CD8-positive, alpha-beta T cell (primary cell): ENCODE measurements at regions of chr14 and their contacts with region 1.

Region 1: DNA sequence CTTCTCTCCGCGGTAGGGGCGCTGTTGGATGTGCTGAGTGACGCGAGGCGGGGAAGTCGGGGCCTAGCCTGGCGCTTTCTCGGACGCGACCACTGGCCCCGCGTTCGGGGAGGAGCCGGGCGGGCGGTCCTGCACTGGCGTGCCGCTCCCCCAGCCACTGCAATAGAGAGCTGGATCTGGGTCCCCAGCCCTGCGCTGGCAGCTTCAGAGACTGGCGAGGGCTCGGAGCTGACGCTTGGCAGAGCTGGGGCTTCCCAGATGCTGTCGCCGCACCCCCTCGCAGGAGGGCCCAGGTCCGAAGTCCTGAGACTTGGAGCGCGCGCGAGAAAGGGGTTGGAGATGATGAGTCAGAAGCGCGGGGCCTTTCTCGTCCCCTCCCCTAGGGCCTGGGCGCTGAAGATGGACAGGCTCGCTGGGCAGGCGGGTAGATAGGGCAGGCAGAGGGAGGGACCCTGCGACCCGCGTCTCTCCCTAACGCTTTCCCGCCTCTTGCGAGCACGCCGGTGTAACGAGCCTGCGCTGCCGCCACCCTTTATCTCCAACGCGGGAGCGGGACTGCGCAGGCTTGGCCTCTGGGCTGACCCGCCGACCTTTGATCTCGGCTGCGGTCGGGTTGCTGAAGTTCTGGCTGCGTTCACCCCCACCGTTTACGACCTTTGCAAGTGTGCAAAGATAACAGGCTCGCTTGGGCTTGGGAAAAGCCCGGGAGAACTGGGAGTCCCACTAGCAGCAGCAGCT is 3.0 kb downstream of the TMEM253 start:
- DNase-seq: peak; percentile 87 to 96 (median 93)
- ATAC-seq: peak; percentile 85
- H3K4me3 ChIP-seq: peak overlapping the region; percentile 68 to 75
- H3K4me3 Mint-ChIP-seq: peak overlapping the region; percentile 91
- H3K27ac ChIP-seq: peak overlapping the region; percentile 94 to 99
- H3K27ac Mint-ChIP-seq: peak overlapping the region; percentile 95
- H3K4me1 ChIP-seq: peaks cover 20% of the 10 kb centered on the region
- H3K4me1 Mint-ChIP-seq: peaks cover 21% of the 10 kb centered on the region
- H3K27me3 ChIP-seq: no peaks in the 10 kb centered on the region
- H3K27me3 Mint-ChIP-seq: no peaks in the 10 kb centered on the region
- CTCF ChIP-seq: peak; percentile 73

Region 2: DNA sequence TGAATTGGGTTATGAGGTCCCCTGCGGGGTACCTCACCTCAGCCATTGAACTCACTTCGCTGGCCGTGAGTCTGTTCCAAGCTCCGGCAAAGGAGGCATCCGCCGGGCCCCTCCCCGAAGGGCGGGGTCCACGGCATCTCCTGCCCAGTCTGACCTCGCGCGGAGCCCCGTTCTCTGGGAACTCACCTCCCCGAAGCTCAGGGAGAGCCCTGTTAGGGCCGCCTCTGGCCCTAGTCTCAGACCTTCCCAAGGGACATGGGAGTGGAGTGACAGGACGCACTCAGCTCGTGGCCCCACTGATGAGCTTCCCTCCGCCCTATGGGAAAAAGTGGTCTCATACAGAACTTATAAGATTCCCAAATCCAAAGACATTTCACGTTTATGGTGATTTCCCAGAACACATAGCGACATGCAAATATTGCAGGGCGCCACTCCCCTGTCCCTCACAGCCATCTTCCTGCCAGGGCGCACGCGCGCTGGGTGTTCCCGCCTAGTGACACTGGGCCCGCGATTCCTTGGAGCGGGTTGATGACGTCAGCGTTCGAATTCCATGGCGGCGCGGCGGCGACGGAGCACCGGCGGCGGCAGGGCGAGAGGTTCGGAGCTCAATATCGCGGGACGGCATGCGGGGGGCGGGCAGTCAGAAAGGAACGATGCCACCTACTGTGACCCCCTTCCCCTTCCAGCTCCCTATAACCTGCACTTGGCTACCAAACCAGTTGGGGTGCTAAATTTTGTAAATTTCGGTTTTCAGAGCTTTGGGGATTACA is 760.6 kb before region 1 on chr14 and contains the start of gene PARP2:
- CTCF ChIA-PET with region 1: no interaction called
- POLR2A ChIA-PET with region 1: no interaction called
- intact Hi-C with region 1: loop called in 1 of 2 experiments (anchors 10 kb)
- DNase-seq: peak; percentile 70 to 97 (median 84)
- ATAC-seq: peak; percentile 81
- H3K4me3 ChIP-seq: peak within 1 kb of the TSS; percentile 96 to 98
- H3K4me3 Mint-ChIP-seq: peak within 1 kb of the TSS; percentile 100
- H3K27ac ChIP-seq: peak within 1 kb of the TSS; percentile 79 to 93
- H3K27ac Mint-ChIP-seq: peak within 1 kb of the TSS; percentile 97
- H3K4me1 ChIP-seq: peaks cover 8% of the 10 kb centered on the region
- H3K4me1 Mint-ChIP-seq: peaks cover 18% of the 10 kb centered on the region
- H3K27me3 ChIP-seq: peaks cover 0 to 3% of the 10 kb centered on the region in 2 experiments
- H3K27me3 Mint-ChIP-seq: no peaks in the 10 kb centered on the region
- CTCF ChIP-seq: peak; percentile 14
- total RNA-seq, gene PARP2: 15.9 to 16.5 TPM

Region 3: GRCh38 chr14:20697273-20698017 is 406.4 kb before region 1 on chr14:
- CTCF ChIA-PET with region 1: no interaction called
- POLR2A ChIA-PET with region 1: no interaction called
- intact Hi-C with region 1: loop called in 1 of 2 experiments (anchors 2 kb)
- DNase-seq: peak; percentile 44 to 76 (median 60)
- ATAC-seq: peak; percentile 72
- H3K4me3 ChIP-seq: no peak overlapping the region
- H3K4me3 Mint-ChIP-seq: no peak overlapping the region
- H3K27ac ChIP-seq: no peak overlapping the region
- H3K27ac Mint-ChIP-seq: no peak overlapping the region
- H3K4me1 ChIP-seq: no peaks in the 10 kb centered on the region
- H3K4me1 Mint-ChIP-seq: no peaks in the 10 kb centered on the region
- H3K27me3 ChIP-seq: no peaks in the 10 kb centered on the region
- H3K27me3 Mint-ChIP-seq: no peaks in the 10 kb centered on the region
- CTCF ChIP-seq: peak; percentile 75

Region 4: GRCh38 chr14:20989572-20990551 is 114.0 kb before region 1 on chr14 and contains the start of gene METTL17:
- CTCF ChIA-PET with region 1: interaction called, 3 read pairs
- POLR2A ChIA-PET with region 1: interaction called, 5 read pairs
- intact Hi-C with region 1: loop called in 1 of 2 experiments (anchors 1 kb)
- DNase-seq: peak; percentile 65 to 94 (median 85)
- ATAC-seq: peak; percentile 92
- H3K4me3 ChIP-seq: peak within 1 kb of the TSS; percentile 92 to 96
- H3K4me3 Mint-ChIP-seq: peak within 1 kb of the TSS; percentile 95
- H3K27ac ChIP-seq: peak within 1 kb of the TSS; percentile 65 to 73
- H3K27ac Mint-ChIP-seq: peak within 1 kb of the TSS; percentile 94
- H3K4me1 ChIP-seq: peaks cover 18% of the 10 kb centered on the region
- H3K4me1 Mint-ChIP-seq: peaks cover 28% of the 10 kb centered on the region
- H3K27me3 ChIP-seq: no peaks in the 10 kb centered on the region
- H3K27me3 Mint-ChIP-seq: no peaks in the 10 kb centered on the region
- CTCF ChIP-seq: peak; percentile 28
- total RNA-seq, gene METTL17: 82.3 to 88.8 TPM

Region 5: DNA sequence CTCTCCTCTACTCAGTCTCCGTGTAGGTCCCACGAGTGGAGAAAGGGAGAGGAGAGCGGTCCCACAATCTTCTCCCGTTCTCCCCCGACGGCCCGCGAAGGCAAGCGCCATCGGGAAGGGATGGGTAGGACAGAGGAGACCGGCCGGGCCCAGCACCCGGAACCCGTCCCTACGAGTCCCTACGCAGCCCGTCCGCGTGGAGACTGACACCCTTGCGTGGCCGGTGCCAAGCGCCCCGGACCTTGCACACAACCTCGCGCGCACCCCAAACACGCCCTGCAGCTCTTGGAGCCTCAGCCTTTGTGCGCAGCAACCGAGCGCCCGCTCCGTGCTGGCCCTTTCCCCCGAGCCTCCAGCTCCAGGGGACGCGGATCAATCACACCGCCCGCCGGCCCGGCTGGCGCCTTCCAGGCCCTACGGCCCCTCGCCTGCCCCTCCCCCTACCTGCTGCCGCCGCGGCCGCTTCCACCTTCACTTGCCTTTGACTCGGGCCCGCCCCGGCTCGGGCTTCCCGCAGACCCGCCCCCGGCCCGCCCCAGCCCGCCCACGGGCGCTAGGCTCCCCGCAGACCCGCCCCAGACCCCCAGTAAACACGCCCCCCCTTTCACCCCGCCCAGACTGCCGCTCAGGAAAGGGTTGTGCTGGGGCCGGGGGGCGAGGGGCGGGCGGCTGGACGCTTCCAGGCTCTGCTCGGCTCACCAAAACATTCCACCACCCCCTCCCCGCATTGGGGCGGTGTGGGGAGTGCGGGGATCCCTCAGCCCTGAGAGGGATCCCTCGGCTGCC is 79.1 kb before region 1 on chr14 and contains the start of gene NDRG2:
- CTCF ChIA-PET with region 1: interaction called, 336 read pairs
- POLR2A ChIA-PET with region 1: interaction called, 7 read pairs
- intact Hi-C with region 1: loop called in 1 of 2 experiments (anchors 1 kb)
- DNase-seq: peak; percentile 60 to 87 (median 80)
- ATAC-seq: peak; percentile 91
- H3K4me3 ChIP-seq: peak within 1 kb of the TSS; percentile 84 to 86
- H3K4me3 Mint-ChIP-seq: peak within 1 kb of the TSS; percentile 92
- H3K27ac ChIP-seq: peak within 1 kb of the TSS in 1 of 2 experiments; percentile 33
- H3K27ac Mint-ChIP-seq: peak within 1 kb of the TSS; percentile 70
- H3K4me1 ChIP-seq: peaks cover 13% of the 10 kb centered on the region
- H3K4me1 Mint-ChIP-seq: peaks cover 19% of the 10 kb centered on the region
- H3K27me3 ChIP-seq: no peaks in the 10 kb centered on the region
- H3K27me3 Mint-ChIP-seq: no peaks in the 10 kb centered on the region
- CTCF ChIP-seq: no peak
- total RNA-seq, gene NDRG2: 18.9 to 24.8 TPM

Region 6: DNA sequence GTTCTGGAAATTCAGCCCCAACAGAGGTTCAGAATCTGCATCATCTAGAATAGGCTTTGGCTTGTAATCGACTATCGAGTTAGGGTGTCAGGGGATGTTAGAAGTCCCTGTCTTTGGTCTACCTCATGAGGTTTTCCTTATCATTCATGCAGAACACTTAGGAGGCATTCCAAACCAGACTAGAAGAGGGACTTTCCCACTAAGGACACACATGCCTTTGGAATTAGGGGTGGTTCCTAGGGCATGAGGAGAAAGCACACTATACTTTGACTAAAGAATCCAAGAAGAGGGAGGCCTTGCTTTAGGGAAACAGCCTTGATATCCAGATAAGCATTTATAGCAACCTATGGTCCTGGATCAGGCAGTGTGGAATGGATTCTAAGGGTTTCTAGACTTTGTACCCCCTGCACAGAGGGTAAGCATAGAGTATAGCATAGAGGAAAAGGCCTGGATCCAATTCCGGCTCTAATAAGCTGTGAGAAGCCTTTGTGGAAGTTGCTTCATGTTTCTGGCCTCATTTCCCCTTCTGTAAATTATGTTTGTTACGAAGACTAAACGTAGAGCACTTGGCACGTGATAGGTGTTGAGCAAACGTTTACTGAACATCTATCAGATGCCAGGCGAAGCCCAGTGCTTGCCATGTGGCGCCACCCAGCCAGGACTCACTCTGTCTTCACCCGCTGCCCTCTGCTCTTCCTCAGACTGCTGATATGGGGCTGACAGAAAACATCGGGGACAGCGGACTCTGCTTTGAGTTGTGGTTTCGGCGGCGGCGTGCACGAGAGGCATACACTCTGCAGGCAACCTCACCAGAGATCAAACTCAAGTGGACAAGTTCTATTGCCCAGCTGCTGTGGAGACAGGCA is 18.7 kb before region 1 on chr14:
- CTCF ChIA-PET with region 1: interaction called, 49 read pairs
- POLR2A ChIA-PET with region 1: interaction called, 14 read pairs
- intact Hi-C with region 1: loop called in 1 of 2 experiments (anchors 1 kb)
- DNase-seq: no peak
- ATAC-seq: no peak
- H3K4me3 ChIP-seq: no peak overlapping the region
- H3K4me3 Mint-ChIP-seq: no peak overlapping the region
- H3K27ac ChIP-seq: no peak overlapping the region
- H3K27ac Mint-ChIP-seq: no peak overlapping the region
- H3K4me1 ChIP-seq: peaks cover 18% of the 10 kb centered on the region
- H3K4me1 Mint-ChIP-seq: peaks cover 20% of the 10 kb centered on the region
- H3K27me3 ChIP-seq: no peaks in the 10 kb centered on the region
- H3K27me3 Mint-ChIP-seq: no peaks in the 10 kb centered on the region
- CTCF ChIP-seq: no peak

Region 7: DNA sequence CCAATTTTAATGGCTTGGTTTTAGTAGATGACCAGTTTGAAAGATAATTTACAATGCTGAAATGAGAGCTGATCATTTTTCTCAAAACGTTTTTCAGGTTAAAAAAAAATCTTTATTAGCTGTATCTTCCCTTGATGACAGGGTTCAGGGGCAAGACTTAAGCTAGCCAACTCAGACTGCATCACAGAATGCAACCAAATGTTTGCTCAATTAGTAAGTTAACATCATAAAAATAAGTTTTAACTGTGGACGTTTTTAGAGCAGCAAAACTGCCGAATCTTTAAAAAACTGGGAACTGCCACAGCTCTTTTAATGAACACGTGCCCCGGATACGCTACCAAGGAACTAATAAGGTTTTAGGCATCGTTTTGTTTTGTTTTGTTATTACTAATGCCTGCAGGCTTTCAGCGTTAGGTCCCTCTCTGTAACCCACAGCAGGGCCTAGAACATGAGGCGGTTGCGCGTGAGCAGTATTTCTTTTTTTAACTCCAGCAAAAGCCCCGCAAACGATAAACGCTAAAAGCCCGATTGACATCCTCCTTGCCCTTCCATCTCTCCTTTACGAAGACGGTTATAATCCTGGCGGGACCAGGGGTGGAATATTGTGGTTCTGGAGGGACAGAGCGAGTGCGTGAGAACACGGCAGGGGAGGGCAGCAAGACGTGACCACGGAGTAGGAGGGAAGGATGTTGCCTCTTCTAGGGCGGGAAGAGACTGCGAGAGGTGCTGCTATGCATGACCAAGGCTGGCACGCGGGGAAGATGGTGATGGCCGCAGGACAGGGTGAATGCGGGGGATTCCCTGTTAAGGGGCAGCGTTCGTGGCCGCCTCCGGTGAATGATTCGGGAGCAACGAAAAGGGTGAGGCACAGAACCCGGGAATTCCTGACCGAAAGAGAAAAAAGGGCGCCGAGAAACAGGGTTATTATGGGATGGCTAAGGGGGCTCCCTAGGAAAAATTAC is 279.3 kb after region 1 on chr14:
- CTCF ChIA-PET with region 1: no interaction called
- POLR2A ChIA-PET with region 1: no interaction called
- intact Hi-C with region 1: no loop called
- DNase-seq: peak; percentile 3 to 74 (median 41)
- ATAC-seq: peak; percentile 28
- H3K4me3 ChIP-seq: peak overlapping the region; percentile 87 to 91
- H3K4me3 Mint-ChIP-seq: peak overlapping the region; percentile 98
- H3K27ac ChIP-seq: peak overlapping the region; percentile 89 to 96
- H3K27ac Mint-ChIP-seq: peak overlapping the region; percentile 99
- H3K4me1 ChIP-seq: peaks cover 17% of the 10 kb centered on the region
- H3K4me1 Mint-ChIP-seq: peaks cover 45% of the 10 kb centered on the region
- H3K27me3 ChIP-seq: no peaks in the 10 kb centered on the region
- H3K27me3 Mint-ChIP-seq: no peaks in the 10 kb centered on the region
- CTCF ChIP-seq: no peak

Region 8: DNA sequence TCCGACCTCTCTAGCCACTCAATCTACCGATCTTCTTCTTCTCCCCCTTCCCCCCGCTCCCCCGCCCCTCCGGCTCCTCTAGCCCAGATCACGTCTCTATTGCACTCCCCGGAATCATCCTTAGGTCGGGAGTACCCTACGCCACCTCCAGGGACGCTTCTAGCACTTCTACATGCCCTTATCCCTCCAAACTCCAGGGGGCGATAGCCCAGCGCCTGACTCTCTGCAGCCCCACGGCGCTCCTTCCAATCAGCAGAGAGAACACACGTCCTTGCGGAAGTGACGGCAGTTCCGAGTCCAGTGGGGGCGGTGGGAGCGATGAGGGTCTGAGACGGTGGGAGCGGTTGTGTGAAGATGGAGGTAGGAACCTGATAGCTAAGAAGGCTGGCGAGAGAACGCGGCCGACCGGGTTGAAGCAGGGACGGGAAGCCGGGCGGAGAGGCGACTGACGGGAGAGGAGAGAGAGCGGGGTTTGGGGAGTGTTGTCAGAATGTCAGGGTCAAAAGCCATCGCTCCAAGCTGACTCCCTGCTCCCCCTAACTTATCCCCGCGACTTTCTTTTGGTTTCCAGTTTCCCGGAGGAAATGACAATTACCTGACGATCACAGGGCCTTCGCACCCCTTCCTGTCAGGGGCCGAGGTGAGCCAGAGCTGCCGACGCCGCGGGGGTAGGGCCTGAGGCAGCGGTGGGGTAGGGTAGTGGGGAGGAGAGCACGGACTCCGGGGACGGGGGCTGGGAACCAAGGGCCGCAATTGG is 373.2 kb after region 1 on chr14 and contains the starts of genes RAB2B and TOX4:
- CTCF ChIA-PET with region 1: no interaction called
- POLR2A ChIA-PET with region 1: no interaction called
- intact Hi-C with region 1: loop called in 1 of 2 experiments (anchors 2 kb)
- DNase-seq: peak; percentile 86 to 99 (median 95)
- ATAC-seq: peak; percentile 96
- H3K4me3 ChIP-seq: peak within 1 kb of the TSS; percentile 87 to 94
- H3K4me3 Mint-ChIP-seq: peak within 1 kb of the TSS; percentile 99
- H3K27ac ChIP-seq: peak within 1 kb of the TSS; percentile 93 to 94
- H3K27ac Mint-ChIP-seq: peak within 1 kb of the TSS; percentile 99
- H3K4me1 ChIP-seq: peaks cover 22% of the 10 kb centered on the region
- H3K4me1 Mint-ChIP-seq: peaks cover 52% of the 10 kb centered on the region
- H3K27me3 ChIP-seq: no peaks in the 10 kb centered on the region
- H3K27me3 Mint-ChIP-seq: no peaks in the 10 kb centered on the region
- CTCF ChIP-seq: peak; percentile 98
- total RNA-seq, gene RAB2B: 24.0 to 26.6 TPM
- total RNA-seq, gene TOX4: 95.0 to 100 TPM